Ovary (tissue), 10 donors: ENCODE measurements at regions of chr17 and their contacts with region 1.

Region 1: GRCh38 chr17:66704858-66705520 is 129.9 kb upstream of the CACNG5 start:
- DNase-seq: no peak
- H3K4me3 ChIP-seq: no peak overlapping the region
- H3K27ac ChIP-seq: no peak overlapping the region
- H3K4me1 ChIP-seq: no peaks in the 10 kb centered on the region
- H3K27me3 ChIP-seq: no peaks in the 10 kb centered on the region
- CTCF ChIP-seq: no peak
- EP300 ChIP-seq: no peak
- POLR2A ChIP-seq: no peak

Region 2: DNA sequence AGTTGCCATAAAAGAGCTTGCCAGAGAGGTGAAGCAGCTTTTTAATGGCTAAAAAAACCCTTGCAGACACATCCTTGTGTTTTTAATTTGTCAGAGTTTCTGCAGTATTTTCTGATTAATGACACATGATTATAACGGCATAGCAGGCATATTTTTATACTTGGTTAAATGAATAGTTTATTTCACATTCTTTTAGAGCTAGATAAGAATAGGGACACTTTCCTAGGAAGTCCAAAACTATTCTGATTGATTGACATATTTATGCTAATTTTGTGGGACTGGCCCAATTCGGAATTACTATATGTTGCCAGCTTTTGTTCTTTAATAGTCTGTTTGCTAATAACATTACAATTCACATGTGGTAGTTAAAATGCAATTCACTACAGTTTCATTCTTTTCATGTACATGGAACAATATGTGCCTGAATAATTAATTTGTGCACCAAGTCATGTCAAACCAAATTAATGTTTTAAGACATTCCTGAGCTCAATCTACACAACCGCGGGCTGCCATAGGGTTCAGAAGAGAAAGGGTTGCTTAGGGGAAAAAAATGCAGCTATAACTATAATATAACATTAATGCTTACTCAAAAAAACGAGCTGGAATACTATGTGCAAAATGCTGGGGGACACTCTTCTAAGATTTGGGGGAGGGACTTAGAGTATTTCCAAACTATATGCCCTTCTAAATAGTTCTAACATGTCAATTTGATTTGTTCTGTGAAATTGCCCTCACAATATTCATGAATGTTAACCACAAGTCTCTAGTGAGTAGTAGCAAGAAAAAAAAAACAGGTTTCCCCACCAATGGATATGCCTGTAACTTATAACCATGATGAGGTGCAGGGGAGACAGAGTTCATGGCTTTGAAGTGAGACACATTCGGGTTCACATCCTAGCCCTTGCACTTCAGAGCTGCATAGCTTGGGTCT is 818.4 kb before region 1 on chr17:
- intact Hi-C with region 1: no loop called
- DNase-seq: no peak
- H3K4me3 ChIP-seq: no peak overlapping the region
- H3K27ac ChIP-seq: no peak overlapping the region
- H3K4me1 ChIP-seq: no peaks in the 10 kb centered on the region
- H3K27me3 ChIP-seq: no peaks in the 10 kb centered on the region
- CTCF ChIP-seq: no peak
- EP300 ChIP-seq: no peak
- POLR2A ChIP-seq: no peak

Region 3: GRCh38 chr17:66567234-66568170 is 137.5 kb before region 1 on chr17:
- intact Hi-C with region 1: no loop called
- DNase-seq: peak; percentile 58 to 84 (median 72)
- H3K4me3 ChIP-seq: no peak overlapping the region
- H3K27ac ChIP-seq: no peak overlapping the region
- H3K4me1 ChIP-seq: peaks cover 3% of the 10 kb centered on the region
- H3K27me3 ChIP-seq: no peaks in the 10 kb centered on the region
- CTCF ChIP-seq: peak; percentile 30 to 35 (median 34)
- EP300 ChIP-seq: no peak
- POLR2A ChIP-seq: no peak

Region 4: DNA sequence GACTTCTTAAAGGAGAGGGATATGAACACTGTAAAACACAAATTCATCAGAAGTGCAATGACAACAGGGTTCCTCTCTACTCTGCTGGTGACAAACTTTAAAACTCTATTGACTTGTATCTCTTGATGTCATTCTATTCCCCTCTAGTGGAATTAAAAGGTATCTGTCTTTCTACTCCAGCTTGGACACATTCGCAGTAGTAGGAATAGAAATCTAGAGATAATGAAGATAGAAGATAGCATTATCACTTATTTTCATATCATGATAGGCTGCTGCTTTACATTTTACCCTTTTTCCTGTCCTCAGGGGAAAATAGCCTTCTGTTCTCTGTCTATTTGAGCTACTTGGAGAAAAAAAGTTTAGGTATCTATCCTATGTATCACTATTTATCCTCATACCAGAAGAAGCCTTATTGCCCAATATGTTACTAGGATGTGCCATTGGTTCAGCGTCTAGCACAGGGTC is 79.6 kb before region 1 on chr17:
- intact Hi-C with region 1: no loop called
- DNase-seq: no peak
- H3K4me3 ChIP-seq: no peak overlapping the region
- H3K27ac ChIP-seq: no peak overlapping the region
- H3K4me1 ChIP-seq: no peaks in the 10 kb centered on the region
- H3K27me3 ChIP-seq: no peaks in the 10 kb centered on the region
- CTCF ChIP-seq: peak; percentile 21 to 42 (median 22)
- EP300 ChIP-seq: no peak
- POLR2A ChIP-seq: no peak

Region 5: DNA sequence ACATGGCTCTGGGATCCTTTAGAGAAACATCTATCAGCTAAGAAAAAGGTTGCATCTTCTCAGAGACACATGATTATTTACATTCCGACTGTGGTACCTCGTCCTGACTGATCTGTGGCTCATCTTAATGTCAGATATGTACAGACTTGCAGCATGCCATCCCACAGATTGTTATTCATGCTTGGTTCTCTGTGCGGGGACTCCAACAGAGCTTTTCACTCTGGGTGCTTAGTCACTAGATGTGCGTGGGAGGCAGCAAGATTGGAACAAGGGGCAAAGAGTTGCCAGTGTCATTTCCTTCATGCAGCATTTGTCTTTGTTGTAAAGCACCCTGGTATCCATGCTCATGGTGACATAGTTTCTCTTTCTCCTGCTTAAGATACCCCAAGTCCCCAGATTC is 49.1 kb before region 1 on chr17:
- intact Hi-C with region 1: no loop called
- DNase-seq: no peak
- H3K4me3 ChIP-seq: no peak overlapping the region
- H3K27ac ChIP-seq: no peak overlapping the region
- H3K4me1 ChIP-seq: peaks cover 3% of the 10 kb centered on the region
- H3K27me3 ChIP-seq: no peaks in the 10 kb centered on the region
- CTCF ChIP-seq: no peak
- EP300 ChIP-seq: no peak
- POLR2A ChIP-seq: no peak

Region 6: DNA sequence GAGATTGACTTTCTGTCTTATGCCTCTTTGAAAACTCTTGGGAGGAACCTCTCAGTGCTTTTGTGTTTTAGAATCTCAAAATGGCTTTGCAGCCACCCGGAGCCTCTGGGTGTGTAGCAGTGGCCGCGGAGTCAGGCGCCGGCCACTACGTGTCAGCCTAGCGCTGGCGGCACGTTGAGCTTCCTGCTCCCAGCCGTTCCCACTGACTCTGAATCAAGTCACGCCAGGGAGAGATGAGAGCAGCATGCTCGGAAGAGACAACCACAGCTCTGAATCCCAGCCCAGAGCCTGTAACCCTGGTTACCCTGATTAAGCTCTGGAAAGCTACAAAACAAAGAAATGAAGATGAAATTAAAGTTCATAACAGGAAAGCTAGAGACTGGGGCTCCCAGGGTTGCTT is 32.5 kb after region 1 on chr17:
- intact Hi-C with region 1: loop called in 1 of 4 experiments (anchors 2 kb)
- DNase-seq: peak; percentile 39 to 55 (median 41)
- H3K4me3 ChIP-seq: no peak overlapping the region
- H3K27ac ChIP-seq: no peak overlapping the region
- H3K4me1 ChIP-seq: no peaks in the 10 kb centered on the region
- H3K27me3 ChIP-seq: no peaks in the 10 kb centered on the region
- CTCF ChIP-seq: no peak
- EP300 ChIP-seq: no peak
- POLR2A ChIP-seq: no peak